Gastrocnemius medialis (tissue), 4 donors: ENCODE measurements at regions of chr20 and their contacts with region 1.

Region 1: GRCh38 chr20:4006640-4007039 is 8.7 kb downstream of the RNF24 start:
- DNase-seq: peak; percentile 67 to 90
- ATAC-seq: peak; percentile 96 to 100
- H3K4me3 ChIP-seq: no peak overlapping the region
- H3K27ac ChIP-seq: peak overlapping the region in 3 of 4 donors; percentile 11 to 52 (median 17)
- H3K4me1 ChIP-seq: peaks cover 13 to 23% of the 10 kb centered on the region in 2 donors
- H3K27me3 ChIP-seq: no peaks in the 10 kb centered on the region
- CTCF ChIP-seq: no peak
- POLR2A ChIP-seq: no peak

Region 2: DNA sequence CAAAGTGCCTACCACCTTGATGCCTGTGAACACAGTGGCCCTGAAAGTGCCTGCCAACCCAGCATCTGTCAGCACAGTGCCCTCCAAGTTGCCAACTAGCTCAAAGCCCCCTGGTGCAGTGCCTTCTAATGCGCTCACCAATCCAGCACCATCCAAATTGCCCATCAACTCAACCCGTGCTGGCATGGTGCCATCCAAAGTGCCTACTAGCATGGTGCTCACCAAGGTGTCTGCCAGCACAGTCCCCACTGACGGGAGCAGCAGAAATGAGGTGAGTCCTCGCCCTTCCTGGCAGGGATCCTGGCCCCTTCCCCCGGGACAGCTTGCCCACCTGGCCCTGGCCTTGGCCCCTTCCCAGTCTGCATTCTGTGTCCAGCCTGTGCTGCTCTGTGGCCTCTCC is 142.1 kb before region 1 on chr20:
- in situ Hi-C with region 1: no loop called
- intact Hi-C with region 1: no loop called
- DNase-seq: no peak
- ATAC-seq: no peak
- H3K4me3 ChIP-seq: no peak overlapping the region
- H3K27ac ChIP-seq: no peak overlapping the region
- H3K4me1 ChIP-seq: no peaks in the 10 kb centered on the region
- H3K27me3 ChIP-seq: no peaks in the 10 kb centered on the region
- CTCF ChIP-seq: no peak
- POLR2A ChIP-seq: no peak

Region 3: GRCh38 chr20:3932681-3933080 is 74.0 kb before region 1 on chr20:
- in situ Hi-C with region 1: no loop called
- intact Hi-C with region 1: loop called (anchors 5 kb)
- DNase-seq: no peak
- ATAC-seq: peak in 1 of 2 donors; percentile 33
- H3K4me3 ChIP-seq: peak overlapping the region; percentile 54 to 70 (median 64)
- H3K27ac ChIP-seq: peak overlapping the region; percentile 68 to 76 (median 72)
- H3K4me1 ChIP-seq: peaks cover 45 to 48% of the 10 kb centered on the region in 2 donors
- H3K27me3 ChIP-seq: no peaks in the 10 kb centered on the region
- CTCF ChIP-seq: no peak
- POLR2A ChIP-seq: no peak

Region 4: DNA sequence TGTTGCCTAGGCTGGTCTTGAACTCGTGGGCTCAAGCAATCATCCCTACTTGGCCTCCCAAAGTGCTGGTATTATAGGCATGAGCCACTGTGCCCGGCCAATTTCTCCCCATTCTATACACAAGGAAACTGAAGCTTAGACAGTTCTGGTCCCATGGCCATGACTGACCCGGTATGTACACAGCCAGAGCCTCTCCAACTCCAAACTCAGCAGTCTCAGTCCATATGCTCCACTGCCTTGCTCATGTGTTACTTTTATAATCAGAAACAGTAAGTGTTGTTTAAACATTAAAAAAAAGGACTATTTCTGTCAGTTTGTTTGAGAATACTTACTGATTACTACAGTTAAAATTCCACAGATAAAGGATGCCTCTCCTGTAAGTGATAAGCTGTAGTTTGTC is 41.9 kb before region 1 on chr20:
- in situ Hi-C with region 1: no loop called
- intact Hi-C with region 1: no loop called
- DNase-seq: no peak
- ATAC-seq: no peak
- H3K4me3 ChIP-seq: no peak overlapping the region
- H3K27ac ChIP-seq: no peak overlapping the region
- H3K4me1 ChIP-seq: no peaks in the 10 kb centered on the region
- H3K27me3 ChIP-seq: no peaks in the 10 kb centered on the region
- CTCF ChIP-seq: no peak
- POLR2A ChIP-seq: no peak

Region 5: GRCh38 chr20:4297127-4297826 is 290.6 kb after region 1 on chr20:
- in situ Hi-C with region 1: no loop called
- intact Hi-C with region 1: no loop called
- DNase-seq: no peak
- ATAC-seq: peak; percentile 36 to 45
- H3K4me3 ChIP-seq: no peak overlapping the region
- H3K27ac ChIP-seq: peak overlapping the region; percentile 6 to 63 (median 42)
- H3K4me1 ChIP-seq: no peaks in the 10 kb centered on the region
- H3K27me3 ChIP-seq: no peaks in the 10 kb centered on the region
- CTCF ChIP-seq: no peak
- POLR2A ChIP-seq: no peak